ENCODE measurements at regions of chr17 and their contacts with region 1.

Region 1: DNA sequence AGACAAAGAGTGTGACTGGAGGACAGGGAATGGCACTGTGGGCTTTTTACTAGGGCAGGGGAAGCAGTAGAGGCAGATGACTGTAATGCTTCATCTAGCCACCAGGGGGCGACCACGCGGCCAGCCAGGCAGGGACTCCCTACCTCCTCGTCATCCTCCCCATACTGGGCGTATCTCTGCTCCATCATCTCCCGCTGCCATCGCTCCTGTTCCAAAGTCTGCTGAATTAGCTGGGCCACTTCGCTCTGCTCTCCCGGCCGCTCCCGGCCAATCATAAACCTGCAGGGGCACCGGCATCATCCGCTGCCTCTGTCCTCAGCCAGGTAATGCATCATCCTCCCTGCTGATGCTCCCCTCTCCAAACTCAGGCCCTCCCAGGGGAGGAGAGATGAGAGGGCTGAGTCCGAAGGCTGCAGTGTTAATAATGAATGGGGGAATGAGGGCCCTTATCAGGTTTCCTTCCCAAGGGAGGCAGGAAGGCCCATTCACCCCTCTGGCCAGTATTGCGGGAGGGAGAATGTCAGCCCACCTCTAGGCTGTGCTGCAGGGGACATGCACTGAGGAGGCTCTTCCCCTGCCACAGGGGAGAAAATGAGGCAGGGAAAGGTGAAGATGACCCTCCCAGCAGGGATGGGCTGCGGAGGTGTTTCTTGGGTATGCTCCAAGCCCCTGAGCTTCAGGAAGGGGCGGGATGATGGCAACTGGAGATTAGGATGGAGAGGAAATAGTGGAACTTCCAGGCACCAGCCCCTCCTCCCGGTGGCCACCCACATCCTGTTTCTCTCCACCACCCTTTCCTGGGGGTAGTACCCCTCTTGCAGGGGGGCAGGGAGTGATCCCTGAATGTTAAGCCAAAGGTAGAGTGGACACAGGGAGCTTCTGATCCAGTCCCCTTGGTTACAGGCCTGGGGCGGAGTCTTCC is 10.3 kb upstream of the SAMD14 start:
- DNase-seq: peak; percentile 78
- H3K4me3 ChIP-seq: no peak overlapping the region
- H3K27ac ChIP-seq: no peak overlapping the region
- H3K4me1 ChIP-seq: peaks cover 32% of the 10 kb centered on the region
- H3K27me3 ChIP-seq: no peaks in the 10 kb centered on the region
- CTCF ChIP-seq: peak; percentile 94 to 99
- POLR2A ChIP-seq: no peak

Region 2: GRCh38 chr17:50129728-50130558 is 10.3 kb before region 1 on chr17 and contains the start of gene SAMD14:
- CTCF ChIA-PET with region 1: interaction called, 15 read pairs
- POLR2A ChIA-PET with region 1: no interaction called
- dilution Hi-C with region 1: no loop called
- intact Hi-C with region 1: no loop called
- DNase-seq: peak; percentile 53
- H3K4me3 ChIP-seq: peak within 1 kb of the TSS; percentile 22 to 53 (median 31)
- H3K27ac ChIP-seq: peak within 1 kb of the TSS; percentile 56
- H3K4me1 ChIP-seq: peaks cover 21% of the 10 kb centered on the region
- H3K27me3 ChIP-seq: no peaks in the 10 kb centered on the region
- CTCF ChIP-seq: no peak
- POLR2A ChIP-seq: no peak
- total RNA-seq, gene SAMD14: 15.6 and 16.1 TPM in 2 replicates

Region 3: GRCh38 chr17:50151041-50151936 is 11.1 kb after region 1 on chr17:
- CTCF ChIA-PET with region 1: interaction called, 34 read pairs
- POLR2A ChIA-PET with region 1: no interaction called
- dilution Hi-C with region 1: no loop called
- intact Hi-C with region 1: loop called (anchors 1 kb)
- DNase-seq: peak; percentile 85
- H3K4me3 ChIP-seq: peak overlapping the region in 2 of 3 experiments; percentile 24 to 82
- H3K27ac ChIP-seq: peak overlapping the region; percentile 54
- H3K4me1 ChIP-seq: peaks cover 32% of the 10 kb centered on the region
- H3K27me3 ChIP-seq: no peaks in the 10 kb centered on the region
- CTCF ChIP-seq: peak; percentile 27 to 80
- POLR2A ChIP-seq: no peak

Region 4: DNA sequence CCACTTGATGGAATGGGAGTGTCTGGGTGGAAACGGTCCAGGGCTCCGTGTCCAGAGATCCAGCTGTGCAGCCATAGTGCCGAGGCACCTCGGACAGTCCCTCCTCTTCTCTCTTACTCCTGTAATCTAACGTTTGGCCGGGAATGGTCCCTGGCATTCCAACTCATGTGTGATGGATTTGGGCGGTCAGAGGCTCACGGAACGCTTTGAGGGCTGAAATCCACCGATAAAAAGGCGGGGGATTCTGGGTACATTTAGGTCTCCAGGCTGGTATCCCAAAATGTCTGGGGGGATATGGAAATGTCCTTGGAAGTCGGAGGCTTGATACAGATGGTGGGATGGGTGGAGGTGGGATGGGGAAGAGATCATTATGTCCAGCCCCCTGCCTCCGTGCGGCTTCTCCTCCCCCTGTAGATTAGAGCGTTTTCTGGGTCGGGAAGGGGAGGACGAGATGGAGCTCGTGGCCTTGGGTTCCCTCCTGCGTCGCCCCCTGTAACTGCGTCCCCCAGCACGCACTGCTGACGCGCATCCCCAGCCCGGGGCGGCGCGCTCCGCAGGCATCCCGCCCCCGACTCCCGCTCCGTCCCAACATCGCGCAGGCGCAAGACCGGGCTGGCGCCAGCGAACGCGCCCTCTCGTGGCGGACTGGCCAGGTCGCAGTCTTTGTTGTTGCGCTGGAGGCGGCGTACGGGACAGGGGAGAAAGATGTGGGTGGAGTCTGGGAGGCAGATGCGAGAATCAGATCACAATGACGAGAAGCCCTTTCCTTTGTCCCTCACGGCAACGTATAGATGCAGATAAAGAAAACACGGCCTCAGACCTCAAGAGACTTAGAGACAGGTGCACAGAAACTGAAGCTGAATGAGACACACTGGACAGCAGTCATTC is 21.1 kb after region 1 on chr17:
- CTCF ChIA-PET with region 1: interaction called, 37 read pairs
- POLR2A ChIA-PET with region 1: no interaction called
- dilution Hi-C with region 1: no loop called
- intact Hi-C with region 1: loop called (anchors 1 kb)
- DNase-seq: peak; percentile 93
- H3K4me3 ChIP-seq: peak overlapping the region; percentile 28 to 63 (median 39)
- H3K27ac ChIP-seq: no peak overlapping the region
- H3K4me1 ChIP-seq: peaks cover 6% of the 10 kb centered on the region
- H3K27me3 ChIP-seq: peaks cover 0 to 2% of the 10 kb centered on the region in 2 experiments
- CTCF ChIP-seq: peak; percentile 95 to 97
- POLR2A ChIP-seq: peak; percentile 22

Measured in endothelial cell of umbilical vein (primary cell).